ENCODE measurements at regions of chr2 and their contacts with region 1.

Region 1: DNA sequence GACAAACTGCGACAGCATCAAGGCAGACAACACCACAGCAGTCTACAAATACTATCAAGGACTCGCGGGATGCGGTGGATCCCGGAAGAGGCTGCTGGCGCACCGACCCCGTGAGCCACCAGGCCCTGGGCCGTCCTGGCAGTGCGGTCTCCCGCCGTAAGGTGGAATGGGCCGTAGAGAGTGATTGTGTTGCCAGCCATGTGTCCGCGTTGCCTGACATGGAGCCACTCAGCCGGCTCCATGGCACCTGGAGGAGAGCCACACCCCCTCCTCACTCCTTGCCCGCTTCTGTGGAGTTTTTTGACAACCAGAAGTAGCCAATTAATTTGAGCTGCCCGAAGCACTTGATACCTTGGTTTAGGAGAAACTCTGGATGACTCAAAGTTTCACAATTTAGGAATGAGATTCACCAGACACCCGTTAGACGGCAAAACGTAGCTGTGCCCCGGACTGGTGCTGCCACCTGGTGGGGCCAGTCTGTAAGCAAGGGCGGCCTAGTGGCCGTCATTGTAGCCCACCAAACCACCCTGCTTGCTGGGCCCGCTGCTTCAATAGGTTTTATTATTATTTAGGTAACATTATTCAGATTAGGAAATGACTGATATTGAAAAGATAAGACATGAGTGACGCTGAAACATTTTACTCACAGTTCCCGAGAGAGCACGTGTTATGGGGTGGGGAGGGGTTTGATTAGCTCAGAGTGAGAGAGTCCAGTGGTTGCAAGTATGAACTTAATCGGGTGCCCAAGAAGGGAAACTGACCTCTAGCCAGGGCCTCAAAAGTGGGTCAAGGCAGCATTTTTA is 10.2 kb upstream of the IMP4 start:
- DNase-seq: peak; percentile 53
- ATAC-seq: peak; percentile 64
- H3K4me3 ChIP-seq: no peak overlapping the region
- H3K27ac ChIP-seq: no peak overlapping the region
- H3K4me1 ChIP-seq: peaks cover 2 to 33% of the 10 kb centered on the region in 2 experiments; a peak in 3 of 4 replicates
- H3K27me3 ChIP-seq: peaks cover 13% of the 10 kb centered on the region
- CTCF ChIP-seq: peak; percentile 95 to 98 (median 95)
- POLR2A ChIP-seq: no peak
- RAD21 ChIP-seq: peak; percentile 98

Region 2: DNA sequence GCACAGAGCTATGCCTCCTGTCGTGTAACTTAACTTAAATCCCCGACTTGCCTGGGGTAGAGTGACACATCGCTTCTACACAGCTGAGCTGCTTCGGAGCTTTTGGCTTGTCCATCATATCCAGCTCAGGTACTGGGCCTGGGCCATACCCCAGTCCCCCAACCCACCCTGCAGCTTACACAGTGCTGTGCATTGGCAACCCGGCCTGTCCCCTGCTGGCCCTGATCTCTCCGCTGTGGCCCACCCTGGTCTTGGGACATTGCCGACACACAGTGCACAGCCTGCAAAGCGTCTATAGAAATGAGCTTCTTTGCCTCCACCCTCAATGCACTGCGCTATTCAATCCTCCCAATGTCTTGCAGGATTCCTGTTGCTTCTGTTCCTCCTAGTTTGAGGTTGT is 695.8 kb before region 1 on chr2:
- CTCF ChIA-PET with region 1: no interaction called
- POLR2A ChIA-PET with region 1: no interaction called
- RAD21 ChIA-PET with region 1: no interaction called
- intact Hi-C with region 1: no loop called
- DNase-seq: no peak
- ATAC-seq: no peak
- H3K4me3 ChIP-seq: no peak overlapping the region
- H3K27ac ChIP-seq: no peak overlapping the region
- H3K4me1 ChIP-seq: no peaks in the 10 kb centered on the region
- H3K27me3 ChIP-seq: peaks cover 42% of the 10 kb centered on the region
- CTCF ChIP-seq: no peak
- POLR2A ChIP-seq: no peak
- RAD21 ChIP-seq: no peak

Region 3: DNA sequence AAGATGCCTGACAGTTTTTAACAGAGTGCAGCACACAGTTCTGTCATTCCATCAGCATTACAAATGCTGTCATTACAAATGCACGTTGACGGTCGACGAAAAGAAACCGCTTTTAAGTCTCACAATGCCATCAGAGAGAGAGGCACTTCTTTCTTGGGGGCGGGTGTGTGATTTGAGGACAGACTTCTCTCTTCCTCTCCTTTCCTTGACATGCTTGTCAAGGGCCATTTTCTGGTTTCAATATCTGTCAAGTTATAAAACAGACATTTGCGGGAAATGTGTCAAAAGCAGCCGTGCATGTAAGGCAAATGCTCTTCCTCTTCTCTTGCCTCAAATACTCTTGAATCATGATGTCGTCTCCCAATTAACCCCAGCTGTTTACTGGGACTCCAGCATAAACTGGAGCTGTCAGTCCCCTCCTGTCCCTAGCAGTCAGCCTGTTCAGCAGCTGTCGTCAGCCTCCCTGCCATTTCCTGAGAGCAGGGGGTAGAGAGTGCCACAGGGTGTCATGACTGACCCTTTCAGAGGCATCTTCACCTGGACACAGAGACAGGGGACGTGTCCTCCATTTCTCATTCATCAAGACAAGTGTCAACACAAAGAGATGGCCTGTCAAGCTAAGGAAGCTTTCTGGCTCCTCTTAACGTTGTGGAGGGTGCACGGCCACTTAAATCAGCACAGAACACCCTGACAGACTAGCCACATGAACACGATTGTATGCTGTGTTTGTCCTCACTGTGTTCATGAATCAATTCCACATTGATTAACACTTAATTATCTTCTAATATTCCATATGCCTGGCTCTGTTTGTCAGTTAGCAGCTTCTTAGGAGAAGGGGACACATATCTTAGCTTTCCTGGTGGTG is 658.4 kb before region 1 on chr2:
- CTCF ChIA-PET with region 1: no interaction called
- POLR2A ChIA-PET with region 1: no interaction called
- RAD21 ChIA-PET with region 1: no interaction called
- intact Hi-C with region 1: no loop called
- DNase-seq: no peak
- ATAC-seq: no peak
- H3K4me3 ChIP-seq: no peak overlapping the region
- H3K27ac ChIP-seq: no peak overlapping the region
- H3K4me1 ChIP-seq: no peaks in the 10 kb centered on the region
- H3K27me3 ChIP-seq: peaks cover 57% of the 10 kb centered on the region
- CTCF ChIP-seq: no peak
- POLR2A ChIP-seq: no peak
- RAD21 ChIP-seq: no peak

Region 4: GRCh38 chr2:129923265-129924091 is 409.0 kb before region 1 on chr2:
- CTCF ChIA-PET with region 1: no interaction called
- POLR2A ChIA-PET with region 1: no interaction called
- RAD21 ChIA-PET with region 1: no interaction called
- intact Hi-C with region 1: loop called (anchors 5 kb)
- DNase-seq: peak; percentile 35
- ATAC-seq: peak; percentile 87
- H3K4me3 ChIP-seq: no peak overlapping the region
- H3K27ac ChIP-seq: no peak overlapping the region
- H3K4me1 ChIP-seq: peaks cover 2 to 5% of the 10 kb centered on the region in 2 experiments; a peak in 1 of 4 replicates
- H3K27me3 ChIP-seq: peaks cover 10% of the 10 kb centered on the region; the same call in 1 of the 2 replicates
- CTCF ChIP-seq: peak; percentile 45 to 56 (median 53); a peak in 5 of 6 replicates
- POLR2A ChIP-seq: no peak
- RAD21 ChIP-seq: peak; percentile 74

Region 5: DNA sequence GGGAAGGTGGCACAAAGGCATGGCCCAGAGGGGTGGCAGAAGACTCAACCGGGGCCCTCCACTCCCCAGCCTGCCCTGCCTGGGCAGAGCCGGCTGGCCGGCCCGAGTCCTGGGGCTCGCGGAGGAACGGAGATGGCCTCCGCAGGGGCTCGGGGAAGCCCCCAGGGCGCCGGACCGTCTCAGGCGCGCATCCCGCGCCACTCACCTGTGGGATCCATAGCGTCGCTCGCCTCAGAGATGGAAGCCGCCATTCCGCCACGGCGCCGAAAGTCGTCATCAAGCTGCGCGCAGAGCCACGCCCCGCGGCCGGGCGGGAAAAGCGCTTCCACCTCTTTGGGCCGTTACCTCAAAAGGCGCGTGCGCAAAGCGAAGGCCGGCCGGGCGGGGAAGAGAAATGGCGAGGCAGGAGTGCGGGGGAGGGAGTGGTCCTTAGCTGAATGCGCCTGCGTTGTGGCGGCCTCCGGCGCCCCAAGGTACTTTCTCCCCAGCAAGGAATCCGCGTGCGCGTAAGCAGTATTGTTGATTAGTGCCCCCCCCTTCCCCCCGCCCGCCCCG is 151.1 kb before region 1 on chr2 and contains the start of gene SMPD4:
- CTCF ChIA-PET with region 1: interaction called, 3 read pairs
- POLR2A ChIA-PET with region 1: no interaction called
- RAD21 ChIA-PET with region 1: no interaction called
- intact Hi-C with region 1: loop called (anchors 1 kb)
- DNase-seq: peak; percentile 90
- ATAC-seq: peak; percentile 71
- H3K4me3 ChIP-seq: peak within 1 kb of the TSS; percentile 94 to 97
- H3K27ac ChIP-seq: peak within 1 kb of the TSS; percentile 71
- H3K4me1 ChIP-seq: peaks cover 0 to 13% of the 10 kb centered on the region in 2 experiments; a peak in 1 of 4 replicates
- H3K27me3 ChIP-seq: no peaks in the 10 kb centered on the region
- CTCF ChIP-seq: no peak
- POLR2A ChIP-seq: no peak
- RAD21 ChIP-seq: no peak
- total RNA-seq, gene SMPD4: 98.9 TPM

Region 6: DNA sequence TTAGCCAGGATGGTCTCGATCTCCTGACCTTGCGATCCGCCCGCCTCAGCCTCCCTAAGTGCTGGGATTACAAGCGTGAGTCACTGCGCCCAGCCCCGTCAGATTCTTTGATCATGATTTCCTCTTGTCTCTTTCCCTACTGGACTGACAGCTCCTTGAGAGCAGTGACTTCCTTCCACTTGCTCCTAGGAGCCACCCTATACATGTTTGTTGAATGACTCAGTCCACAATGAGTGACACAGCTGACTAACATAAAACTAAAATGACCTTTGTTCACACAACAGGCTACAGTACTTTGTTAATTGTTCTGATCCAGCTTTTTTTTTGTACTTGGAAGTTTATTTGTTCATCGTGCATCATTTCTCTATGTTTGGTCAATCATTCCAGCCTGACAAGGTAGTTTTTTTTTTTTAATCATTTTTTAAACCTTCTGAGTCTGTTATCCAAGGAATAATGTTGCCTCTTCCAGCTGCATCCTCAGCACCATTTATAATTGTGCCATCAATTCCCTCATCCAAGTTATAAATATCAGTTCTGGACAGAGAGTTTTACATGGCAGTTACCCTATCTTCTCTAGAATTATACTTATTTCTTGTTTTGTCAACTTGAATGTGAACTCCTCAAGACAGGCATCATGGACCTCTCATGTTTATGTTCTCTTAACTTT is 91.3 kb before region 1 on chr2:
- CTCF ChIA-PET with region 1: no interaction called
- POLR2A ChIA-PET with region 1: no interaction called
- RAD21 ChIA-PET with region 1: no interaction called
- intact Hi-C with region 1: no loop called
- DNase-seq: peak; percentile 96
- ATAC-seq: peak; percentile 100
- H3K4me3 ChIP-seq: no peak overlapping the region
- H3K27ac ChIP-seq: peak overlapping the region; percentile 34; the same call in 1 of the 2 replicates
- H3K4me1 ChIP-seq: peaks cover 11 to 23% of the 10 kb centered on the region in 2 experiments
- H3K27me3 ChIP-seq: no peaks in the 10 kb centered on the region
- CTCF ChIP-seq: no peak
- POLR2A ChIP-seq: no peak
- RAD21 ChIP-seq: no peak

Region 7: GRCh38 chr2:130342533-130343275 is 10.2 kb after region 1 on chr2 and contains the start of gene IMP4:
- CTCF ChIA-PET with region 1: interaction called, 29 read pairs
- POLR2A ChIA-PET with region 1: no interaction called
- RAD21 ChIA-PET with region 1: interaction called in 1 of 2 experiments, 3 read pairs
- intact Hi-C with region 1: no loop called
- DNase-seq: peak; percentile 99
- ATAC-seq: peak; percentile 89
- H3K4me3 ChIP-seq: peak within 1 kb of the TSS; percentile 94
- H3K27ac ChIP-seq: peak within 1 kb of the TSS; percentile 64
- H3K4me1 ChIP-seq: peaks cover 6 to 18% of the 10 kb centered on the region in 2 experiments
- H3K27me3 ChIP-seq: no peaks in the 10 kb centered on the region
- CTCF ChIP-seq: peak in 2 of 3 experiments; percentile 12 to 28; a peak in 2 of 6 replicates
- POLR2A ChIP-seq: peak; percentile 69
- RAD21 ChIP-seq: no peak
- total RNA-seq, gene IMP4: 121 TPM

Measured in HCT116 (cell line).